A673 (cell line): ENCODE measurements at regions of chr18 and their contacts with region 1.

Region 1: DNA sequence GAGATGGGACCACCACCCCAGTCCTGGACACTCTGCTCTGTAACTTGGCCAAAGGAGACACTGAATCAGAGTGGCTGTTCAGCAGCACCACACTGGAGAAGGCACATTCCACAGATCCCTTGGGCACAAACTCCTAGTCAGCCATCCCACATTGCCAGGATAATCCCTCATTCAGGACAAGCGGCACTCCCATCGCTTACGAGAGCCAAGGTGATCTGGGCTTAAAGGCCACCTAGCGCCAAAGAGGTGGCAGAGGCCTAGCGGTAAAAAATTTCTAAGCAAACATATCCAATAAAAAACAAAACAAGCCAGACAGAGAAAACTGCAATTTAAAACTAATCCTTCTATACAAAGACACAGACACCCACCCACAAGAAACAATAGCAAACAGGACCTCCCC is 62.2 kb downstream of the EPB41L3 start:
- DNase-seq: no peak
- H3K4me3 ChIP-seq: no peak overlapping the region
- H3K27ac ChIP-seq: no peak overlapping the region
- H3K4me1 ChIP-seq: no peaks in the 10 kb centered on the region
- H3K27me3 ChIP-seq: peaks cover 21% of the 10 kb centered on the region
- CTCF ChIP-seq: no peak

Region 2: GRCh38 chr18:5431836-5432575 is 49.6 kb before region 1 on chr18:
- CTCF ChIA-PET with region 1: no interaction called
- POLR2A ChIA-PET with region 1: no interaction called
- intact Hi-C with region 1: loop called (anchors 5 kb)
- DNase-seq: no peak
- H3K4me3 ChIP-seq: no peak overlapping the region
- H3K27ac ChIP-seq: no peak overlapping the region
- H3K4me1 ChIP-seq: no peaks in the 10 kb centered on the region
- H3K27me3 ChIP-seq: no peaks in the 10 kb centered on the region
- CTCF ChIP-seq: no peak